Calu3 (cell line): ENCODE measurements at regions of chr1 and their contacts with region 1.

Region 1: GRCh38 chr1:193763266-193763665 is 576.9 kb upstream of the B3GALT2 start:
- DNase-seq: no peak
- H3K4me3 Mint-ChIP-seq: no peak overlapping the region
- H3K27ac Mint-ChIP-seq: no peak overlapping the region
- H3K4me1 Mint-ChIP-seq: peaks cover 14% of the 10 kb centered on the region
- H3K27me3 Mint-ChIP-seq: no peaks in the 10 kb centered on the region
- CTCF ChIP-seq: no peak

Region 2: GRCh38 chr1:193355179-193355578 is 408.1 kb before region 1 on chr1:
- CTCF ChIA-PET with region 1: no interaction called
- intact Hi-C with region 1: loop called (anchors 10 kb)
- DNase-seq: peak; percentile 22
- H3K4me3 Mint-ChIP-seq: peak overlapping the region; percentile 27
- H3K27ac Mint-ChIP-seq: peak overlapping the region; percentile 91
- H3K4me1 Mint-ChIP-seq: peaks cover 43% of the 10 kb centered on the region
- H3K27me3 Mint-ChIP-seq: no peaks in the 10 kb centered on the region
- CTCF ChIP-seq: no peak